Panc1 (cell line): ENCODE measurements at regions of chr16 and their contacts with region 1.

Region 1: DNA sequence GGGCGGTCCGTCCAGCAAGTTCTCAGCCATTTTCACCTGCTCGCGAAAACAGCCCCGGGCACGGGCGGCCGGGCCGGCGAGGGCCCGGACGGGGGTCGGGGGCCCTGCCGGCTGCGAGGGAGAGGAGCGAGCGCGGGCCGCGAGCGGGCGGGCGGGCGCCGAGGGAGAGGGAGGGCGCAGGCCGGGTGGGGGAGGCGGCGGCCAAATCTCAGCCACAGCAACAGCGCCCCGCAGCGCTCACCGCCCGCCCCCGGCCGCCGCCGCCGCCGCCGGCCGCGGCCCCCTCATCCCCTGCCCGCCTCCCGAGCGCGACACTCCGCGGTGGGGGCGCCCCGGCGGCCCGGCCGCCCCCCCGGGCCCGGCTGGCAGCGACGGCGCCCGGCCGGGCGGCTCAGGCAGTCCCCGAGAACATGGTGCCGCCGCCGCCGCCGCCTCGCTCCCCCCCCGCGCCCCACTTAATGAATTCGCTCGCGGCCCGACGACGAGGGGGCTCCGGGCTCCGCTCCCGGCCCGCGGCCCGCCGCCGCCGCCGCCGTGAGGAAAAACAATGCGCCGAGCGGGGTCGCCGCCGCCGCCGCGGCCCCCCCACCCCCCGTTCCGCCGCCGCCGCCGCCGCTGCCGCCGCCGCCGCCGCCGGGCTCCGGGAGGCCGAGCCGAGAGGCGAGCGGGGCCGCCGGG is 487 bp downstream of the CREBBP start:
- DNase-seq: no peak
- ATAC-seq: peak; percentile 80
- H3K4me3 ChIP-seq: peak overlapping the region; percentile 84 to 93
- H3K27ac ChIP-seq: no peak overlapping the region
- H3K4me1 ChIP-seq: peaks cover 29% of the 10 kb centered on the region
- H3K27me3 ChIP-seq: no peaks in the 10 kb centered on the region
- CTCF ChIP-seq: peak; percentile 79; the same call in 1 of the 2 replicates

Region 2: GRCh38 chr16:3819746-3820724 is 60.0 kb before region 1 on chr16:
- CTCF ChIA-PET with region 1: no interaction called
- POLR2A ChIA-PET with region 1: no interaction called
- in situ Hi-C with region 1: loop called (anchors 10 kb)
- intact Hi-C with region 1: no loop called
- DNase-seq: peak; percentile 24
- ATAC-seq: peak; percentile 58; the same call in 1 of the 2 replicates
- H3K4me3 ChIP-seq: no peak overlapping the region
- H3K27ac ChIP-seq: no peak overlapping the region
- H3K4me1 ChIP-seq: peaks cover 36% of the 10 kb centered on the region
- H3K27me3 ChIP-seq: no peaks in the 10 kb centered on the region
- CTCF ChIP-seq: no peak